Activated CD4-positive, alpha-beta memory T cell treated with anti-CD3 and anti-CD28 coated beads, Interleukin-2, amount 10 ng/mL, durations not matched to agents 7 days and 5 days (primary cell): ENCODE measurements at regions of chr16 and their contacts with region 1.

Region 1: DNA sequence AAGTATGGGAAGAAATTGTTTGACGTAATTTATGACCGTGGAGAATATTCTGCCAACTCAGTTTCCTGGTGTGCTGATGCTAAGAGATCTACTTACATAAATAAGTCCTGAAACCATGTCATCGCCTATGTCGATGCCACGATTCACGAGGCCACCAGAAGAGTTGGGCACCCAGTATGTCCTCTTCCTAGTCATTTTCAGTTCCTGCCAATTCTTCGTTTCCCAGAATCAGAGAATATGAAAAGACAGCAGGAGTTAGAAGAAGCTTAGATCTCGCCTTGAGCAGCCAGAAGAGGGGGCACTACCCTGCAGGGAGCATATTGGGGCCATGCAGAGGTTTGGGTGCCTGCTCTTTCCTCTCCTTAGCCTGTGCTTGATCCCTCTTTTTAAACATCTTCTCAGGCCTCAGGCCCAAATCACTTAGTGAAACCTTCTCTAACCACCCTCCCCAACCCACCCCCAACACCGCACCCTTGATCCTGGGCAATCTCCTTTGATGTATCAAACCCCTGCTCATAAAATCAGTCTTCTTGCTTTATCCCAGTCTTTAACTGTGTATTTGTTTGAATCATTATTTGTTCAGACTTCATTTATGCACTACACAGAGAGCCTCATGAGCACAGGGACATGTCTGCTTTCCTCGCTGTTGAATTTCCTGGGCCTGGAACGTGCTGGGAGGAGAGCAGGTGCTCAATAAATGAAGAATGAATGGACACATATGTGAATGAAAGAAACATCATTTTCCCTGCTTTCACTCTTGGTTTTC is 12.2 kb upstream of the LONP2 start:
- DNase-seq: peak; percentile 56
- H3K4me3 Mint-ChIP-seq: no peak overlapping the region
- H3K27ac Mint-ChIP-seq: peak overlapping the region; percentile 41
- H3K4me1 Mint-ChIP-seq: peaks cover 21% of the 10 kb centered on the region
- H3K27me3 Mint-ChIP-seq: no peaks in the 10 kb centered on the region

Region 2: DNA sequence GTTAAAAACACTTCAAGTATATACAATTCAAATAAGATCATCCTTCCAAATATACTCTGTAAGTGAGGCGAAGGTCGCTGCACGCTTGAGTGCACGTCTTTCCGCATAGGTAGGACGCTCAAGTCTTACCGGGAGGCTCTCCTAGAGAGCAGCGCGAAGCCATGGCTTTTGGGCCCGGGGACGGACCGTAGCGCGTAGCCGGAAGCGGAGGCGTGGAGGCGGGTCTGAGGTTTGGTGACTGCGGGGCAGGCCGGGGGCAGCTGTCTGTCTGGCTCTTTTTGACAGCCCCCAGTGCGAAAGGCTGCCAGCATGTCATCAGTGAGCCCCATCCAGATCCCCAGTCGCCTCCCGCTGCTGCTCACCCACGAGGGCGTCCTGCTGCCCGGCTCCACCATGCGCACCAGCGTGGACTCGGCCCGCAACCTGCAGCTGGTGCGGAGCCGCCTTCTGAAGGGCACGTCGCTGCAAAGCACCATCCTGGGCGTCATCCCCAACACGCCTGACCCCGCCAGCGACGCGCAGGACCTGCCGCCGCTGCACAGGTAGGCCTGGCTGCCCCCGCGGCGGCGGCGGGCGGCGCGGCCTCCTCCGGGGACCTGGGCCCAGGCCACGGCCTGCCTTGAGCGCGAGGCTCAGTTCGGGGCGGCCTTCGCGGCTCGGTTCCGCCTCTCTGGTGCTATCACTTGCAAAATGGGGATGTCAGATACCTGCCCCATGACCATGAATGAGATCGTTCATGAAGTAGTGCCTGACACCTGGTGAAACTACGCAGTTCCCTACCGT is 12.4 kb after region 1 on chr16 and contains the start of gene LONP2:
- CTCF ChIA-PET with region 1: interaction called, 4 read pairs
- POLR2A ChIA-PET with region 1: interaction called, 13 read pairs
- DNase-seq: peak; percentile 93
- H3K4me3 Mint-ChIP-seq: peak within 1 kb of the TSS; percentile 87
- H3K27ac Mint-ChIP-seq: peak within 1 kb of the TSS; percentile 81
- H3K4me1 Mint-ChIP-seq: peaks cover 32% of the 10 kb centered on the region
- H3K27me3 Mint-ChIP-seq: no peaks in the 10 kb centered on the region
- total RNA-seq, gene LONP2: 50.4 to 52.1 TPM

Region 3: DNA sequence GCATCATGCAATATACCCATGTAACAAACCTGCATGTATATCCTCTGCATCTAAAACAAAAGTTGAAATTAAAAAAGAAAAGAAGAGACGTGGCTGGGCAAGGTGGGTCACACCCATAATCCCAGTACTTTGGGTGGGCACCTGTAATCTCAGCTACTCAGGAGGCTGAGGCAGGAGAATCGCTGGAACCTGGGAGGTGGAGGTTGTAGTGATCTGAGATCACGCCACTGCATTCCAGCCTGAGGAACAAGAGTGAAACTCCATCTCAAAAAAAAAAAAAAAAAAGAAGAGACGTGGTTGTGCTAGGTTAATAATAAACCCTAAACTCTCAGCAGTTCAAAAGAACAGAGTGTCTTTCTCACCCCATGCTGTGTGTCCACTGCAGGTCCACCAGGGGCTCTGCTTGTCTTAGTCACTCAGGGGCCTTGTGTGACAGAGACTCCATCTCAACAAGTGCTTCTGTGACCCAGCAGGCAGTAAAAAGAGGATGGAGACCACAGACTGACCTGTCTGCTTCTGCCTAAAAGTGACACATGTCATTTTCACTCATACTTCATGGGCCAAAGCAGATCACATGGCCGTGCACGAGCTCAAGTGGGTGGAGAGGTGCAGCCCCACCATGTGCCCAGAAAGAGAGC is 400.3 kb after region 1 on chr16:
- CTCF ChIA-PET with region 1: interaction called, 31 read pairs
- POLR2A ChIA-PET with region 1: no interaction called
- DNase-seq: no peak
- H3K4me3 Mint-ChIP-seq: no peak overlapping the region
- H3K27ac Mint-ChIP-seq: no peak overlapping the region
- H3K4me1 Mint-ChIP-seq: peaks cover 12% of the 10 kb centered on the region
- H3K27me3 Mint-ChIP-seq: peaks cover 9% of the 10 kb centered on the region